Caco-2 (cell line): ENCODE measurements at regions of chr2 and their contacts with region 1.

Region 1: GRCh38 chr2:101341901-101342624 is 33.6 kb upstream of the RNF149 start:
- DNase-seq: peak; percentile 86 to 92
- H3K4me3 ChIP-seq: no peak overlapping the region
- H3K4me3 Mint-ChIP-seq: no peak overlapping the region
- H3K27ac Mint-ChIP-seq: peak overlapping the region; percentile 37
- H3K4me1 ChIP-seq: peaks cover 57% of the 10 kb centered on the region
- H3K4me1 Mint-ChIP-seq: peaks cover 49% of the 10 kb centered on the region
- H3K27me3 ChIP-seq: no peaks in the 10 kb centered on the region
- H3K27me3 Mint-ChIP-seq: no peaks in the 10 kb centered on the region
- CTCF ChIP-seq: peak; percentile 88 to 93

Region 2: DNA sequence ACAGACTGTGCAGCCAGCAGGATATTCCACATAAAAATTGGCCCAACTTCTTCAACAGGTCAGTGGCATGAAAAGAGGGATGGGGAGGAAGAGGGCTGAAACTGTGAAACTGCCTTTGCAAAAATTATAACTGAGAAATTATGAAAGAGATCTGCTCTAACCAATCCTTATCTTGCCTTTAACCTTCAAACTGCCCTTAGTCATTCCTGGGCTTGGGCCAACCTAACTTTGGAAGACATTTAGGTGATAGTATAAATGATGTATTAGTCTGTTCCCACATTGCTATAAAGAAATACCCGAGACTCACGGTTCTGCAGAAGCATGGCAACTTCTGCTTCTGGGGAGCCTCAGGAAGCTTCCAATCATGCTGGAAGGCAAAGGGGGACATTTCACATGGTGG is 265.5 kb before region 1 on chr2:
- CTCF ChIA-PET with region 1: no interaction called
- POLR2A ChIA-PET with region 1: no interaction called
- intact Hi-C with region 1: no loop called
- DNase-seq: no peak
- H3K4me3 ChIP-seq: no peak overlapping the region
- H3K4me3 Mint-ChIP-seq: no peak overlapping the region
- H3K27ac Mint-ChIP-seq: no peak overlapping the region
- H3K4me1 ChIP-seq: 0 out of 2 replicates have a peak, but pooled peaks cover 8% of the 10 kb centered on the region
- H3K4me1 Mint-ChIP-seq: no peaks in the 10 kb centered on the region
- H3K27me3 ChIP-seq: no peaks in the 10 kb centered on the region
- H3K27me3 Mint-ChIP-seq: no peaks in the 10 kb centered on the region
- CTCF ChIP-seq: no peak

Region 3: DNA sequence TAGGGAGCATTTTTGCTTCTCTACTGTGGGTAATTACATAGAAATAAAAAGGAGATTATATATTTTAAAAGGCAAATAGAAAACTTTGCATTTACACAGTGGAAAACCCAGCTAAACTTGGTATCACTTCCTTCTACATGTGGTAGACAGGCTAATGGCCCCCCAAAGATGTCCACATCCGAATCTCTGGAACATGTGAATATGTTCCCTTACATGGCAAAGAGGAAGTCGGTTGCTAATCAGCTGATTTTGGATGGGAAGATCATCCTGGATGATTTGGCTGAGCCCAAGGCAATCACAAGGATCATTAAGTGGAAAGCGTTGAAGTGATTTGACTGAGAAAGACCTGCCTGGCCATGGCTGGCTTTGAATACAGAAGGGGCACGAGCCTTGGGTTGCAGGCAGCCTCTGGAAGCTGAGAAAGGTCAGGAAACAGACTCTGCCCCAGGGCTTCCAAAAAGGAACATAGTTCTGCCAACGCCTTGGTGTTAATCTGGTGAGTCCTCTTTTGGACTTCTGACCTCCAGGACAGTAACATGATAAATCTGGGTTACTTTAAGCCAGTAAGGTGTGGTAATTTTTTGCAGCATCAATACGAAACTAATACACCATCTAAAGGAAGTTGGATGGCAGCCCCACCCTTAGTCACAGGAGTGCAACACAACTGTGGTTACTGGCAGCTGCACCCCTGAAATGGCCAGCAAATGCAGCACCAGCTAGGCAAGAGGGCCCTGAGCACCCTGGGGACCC is 19.2 kb after region 1 on chr2:
- CTCF ChIA-PET with region 1: interaction called, 14 read pairs
- POLR2A ChIA-PET with region 1: no interaction called
- intact Hi-C with region 1: loop called (anchors 1 kb)
- DNase-seq: no peak
- H3K4me3 ChIP-seq: no peak overlapping the region
- H3K4me3 Mint-ChIP-seq: peak overlapping the region; percentile 19
- H3K27ac Mint-ChIP-seq: peak overlapping the region; percentile 76
- H3K4me1 ChIP-seq: peaks cover 64% of the 10 kb centered on the region
- H3K4me1 Mint-ChIP-seq: peaks cover 37% of the 10 kb centered on the region
- H3K27me3 ChIP-seq: no peaks in the 10 kb centered on the region
- H3K27me3 Mint-ChIP-seq: no peaks in the 10 kb centered on the region
- CTCF ChIP-seq: no peak

Region 4: GRCh38 chr2:101410716-101411211 is 68.7 kb after region 1 on chr2:
- CTCF ChIA-PET with region 1: interaction called, 12 read pairs
- POLR2A ChIA-PET with region 1: no interaction called
- intact Hi-C with region 1: no loop called
- DNase-seq: peak in 1 of 2 experiments; percentile 62
- H3K4me3 ChIP-seq: no peak overlapping the region
- H3K4me3 Mint-ChIP-seq: no peak overlapping the region
- H3K27ac Mint-ChIP-seq: peak overlapping the region; percentile 49
- H3K4me1 ChIP-seq: peaks cover 14% of the 10 kb centered on the region; the same call in 1 of the 2 replicates
- H3K4me1 Mint-ChIP-seq: peaks cover 24% of the 10 kb centered on the region
- H3K27me3 ChIP-seq: no peaks in the 10 kb centered on the region
- H3K27me3 Mint-ChIP-seq: no peaks in the 10 kb centered on the region
- CTCF ChIP-seq: no peak

Region 5: DNA sequence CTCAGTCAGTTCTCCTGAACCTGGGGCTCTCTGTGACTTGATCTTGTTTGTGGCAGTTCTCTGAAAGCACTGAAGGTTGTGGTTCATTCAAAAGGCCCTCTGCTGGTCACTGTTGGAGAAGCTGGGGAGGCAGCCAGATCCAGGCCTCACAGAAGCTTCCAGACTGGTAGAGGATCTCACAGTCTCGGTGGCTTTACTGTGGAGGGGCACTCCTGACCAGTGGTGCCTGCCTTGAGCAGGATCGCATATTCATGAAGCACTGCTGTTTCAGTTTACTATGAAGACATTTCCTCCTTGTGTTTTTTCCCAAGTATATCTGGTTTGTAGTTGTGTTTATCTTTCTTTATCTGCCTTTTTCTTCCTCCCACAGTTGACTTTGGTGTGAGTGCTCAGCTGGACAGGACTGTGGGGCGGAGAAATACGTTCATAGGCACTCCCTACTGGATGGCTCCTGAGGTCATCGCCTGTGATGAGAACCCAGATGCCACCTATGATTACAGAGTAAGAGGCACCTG is 489.3 kb after region 1 on chr2:
- CTCF ChIA-PET with region 1: interaction called, 7 read pairs
- POLR2A ChIA-PET with region 1: no interaction called
- intact Hi-C with region 1: loop called (anchors 2 kb)
- DNase-seq: peak; percentile 80
- H3K4me3 ChIP-seq: no peak overlapping the region
- H3K4me3 Mint-ChIP-seq: no peak overlapping the region
- H3K27ac Mint-ChIP-seq: peak overlapping the region; percentile 66
- H3K4me1 ChIP-seq: peaks cover 33% of the 10 kb centered on the region
- H3K4me1 Mint-ChIP-seq: peaks cover 41% of the 10 kb centered on the region
- H3K27me3 ChIP-seq: no peaks in the 10 kb centered on the region
- H3K27me3 Mint-ChIP-seq: no peaks in the 10 kb centered on the region
- CTCF ChIP-seq: peak; percentile 64 to 90

Region 6: DNA sequence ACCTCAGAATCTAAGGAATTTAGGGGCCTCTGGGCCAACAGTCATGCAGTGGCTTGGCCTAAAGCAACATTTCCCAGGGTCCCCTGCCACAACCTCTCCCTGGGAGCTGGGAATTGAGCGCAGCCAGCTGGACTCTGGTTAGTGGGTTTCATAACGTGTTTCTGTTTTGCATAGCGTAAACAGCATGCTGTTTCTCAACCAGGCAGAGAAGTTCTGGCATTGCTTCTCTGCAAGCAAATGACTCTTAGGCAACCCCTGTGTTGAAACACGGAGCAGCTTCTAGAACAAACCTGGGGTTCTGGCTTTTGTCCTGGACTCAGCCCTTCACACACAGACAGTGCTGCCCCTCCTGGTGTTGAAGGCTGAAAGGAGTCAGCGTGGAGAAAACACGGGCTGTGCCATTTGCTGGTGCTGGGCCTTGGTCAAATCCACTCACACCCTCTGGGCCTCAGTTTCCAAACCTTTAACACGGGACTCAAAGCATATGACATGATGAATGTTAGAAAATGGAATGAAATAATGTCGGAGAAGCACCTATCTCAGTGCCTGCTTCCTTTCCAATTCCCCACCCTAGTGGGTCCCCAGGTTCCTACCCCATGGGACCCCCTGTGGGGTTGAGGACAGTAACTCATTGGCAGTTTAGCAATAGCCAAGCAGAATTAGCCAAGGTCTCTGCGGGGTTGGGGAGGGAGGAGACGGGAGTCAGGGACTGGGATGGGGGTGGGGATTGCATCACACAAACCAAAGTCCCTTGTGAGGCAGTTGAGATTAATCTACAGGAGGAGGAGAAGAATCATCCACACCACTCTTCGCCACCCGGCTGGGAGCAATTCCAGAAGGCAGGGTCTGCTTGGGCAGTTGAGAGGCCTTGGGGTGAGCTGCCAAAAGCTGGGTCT is 619.5 kb after region 1 on chr2:
- CTCF ChIA-PET with region 1: no interaction called
- POLR2A ChIA-PET with region 1: no interaction called
- intact Hi-C with region 1: no loop called
- DNase-seq: peak; percentile 43 to 59
- H3K4me3 ChIP-seq: no peak overlapping the region
- H3K4me3 Mint-ChIP-seq: no peak overlapping the region
- H3K27ac Mint-ChIP-seq: no peak overlapping the region
- H3K4me1 ChIP-seq: peaks cover 17% of the 10 kb centered on the region; the same call in 1 of the 2 replicates
- H3K4me1 Mint-ChIP-seq: no peaks in the 10 kb centered on the region
- H3K27me3 ChIP-seq: no peaks in the 10 kb centered on the region
- H3K27me3 Mint-ChIP-seq: no peaks in the 10 kb centered on the region
- CTCF ChIP-seq: no peak